ENCODE measurements at regions of chr9 and their contacts with region 1.

Region 1: DNA sequence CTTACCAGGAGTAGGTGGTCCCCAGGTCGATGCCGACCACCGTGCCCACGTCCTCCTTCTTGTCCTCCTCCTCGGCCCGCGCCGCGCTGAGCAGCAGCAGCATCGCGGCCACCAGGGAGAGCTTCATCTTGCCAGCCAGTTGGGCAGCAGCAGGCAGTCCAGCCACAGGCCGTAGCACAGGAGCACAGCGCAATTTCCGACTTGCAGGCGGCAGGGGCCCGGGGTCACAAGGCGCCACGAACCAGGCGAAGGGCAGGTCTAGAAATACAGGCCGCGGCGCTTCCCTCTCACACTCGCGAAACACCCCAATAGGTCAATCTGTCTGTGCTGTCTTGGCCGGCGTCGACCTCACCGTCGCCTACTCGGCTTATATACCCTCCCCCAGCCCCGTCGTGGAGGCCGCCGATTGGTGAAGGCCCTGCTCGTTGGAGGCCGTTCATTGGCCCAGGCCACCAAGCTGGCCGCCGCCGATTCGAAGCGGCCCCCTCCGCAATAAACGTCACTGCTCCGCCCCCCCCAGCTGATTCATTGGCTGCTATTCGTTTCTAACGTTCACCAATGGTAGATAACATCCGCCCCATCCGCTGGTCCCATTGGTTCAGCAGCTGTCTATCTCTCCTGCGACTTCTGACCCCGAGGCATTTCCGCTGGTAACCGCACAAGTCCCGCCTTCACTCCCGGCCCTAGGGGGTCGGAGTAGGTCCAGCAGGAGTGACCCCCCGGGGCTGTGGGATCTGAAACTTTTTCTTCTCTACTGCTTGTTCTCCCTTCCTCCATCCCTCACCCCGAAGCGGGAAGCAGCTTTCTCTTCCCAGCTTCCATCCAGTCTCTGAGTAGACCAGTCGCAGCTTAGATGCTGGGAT is at the start of gene HSPA5:
- DNase-seq: peak; percentile 97
- ATAC-seq: peak; percentile 80
- H3K4me3 ChIP-seq: peak within 1 kb of the TSS; percentile 93
- H3K27ac ChIP-seq: peak within 1 kb of the TSS; percentile 72
- H3K4me1 ChIP-seq: peaks cover 43% of the 10 kb centered on the region
- H3K27me3 ChIP-seq: no peaks in the 10 kb centered on the region
- CTCF ChIP-seq: no peak
- total RNA-seq, gene HSPA5: 112 and 142 TPM in 2 replicates

Region 2: GRCh38 chr9:125200210-125201047 is 40.8 kb before region 1 on chr9 and contains the start of gene RABEPK:
- CTCF ChIA-PET with region 1: no interaction called
- POLR2A ChIA-PET with region 1: no interaction called
- intact Hi-C with region 1: no loop called
- DNase-seq: peak; percentile 89
- ATAC-seq: peak; percentile 97
- H3K4me3 ChIP-seq: peak within 1 kb of the TSS; percentile 85
- H3K27ac ChIP-seq: peak within 1 kb of the TSS; percentile 41
- H3K4me1 ChIP-seq: peaks cover 9% of the 10 kb centered on the region
- H3K27me3 ChIP-seq: no peaks in the 10 kb centered on the region
- CTCF ChIP-seq: no peak
- total RNA-seq, gene RABEPK: 22.2 and 27.8 TPM in 2 replicates

Region 3: DNA sequence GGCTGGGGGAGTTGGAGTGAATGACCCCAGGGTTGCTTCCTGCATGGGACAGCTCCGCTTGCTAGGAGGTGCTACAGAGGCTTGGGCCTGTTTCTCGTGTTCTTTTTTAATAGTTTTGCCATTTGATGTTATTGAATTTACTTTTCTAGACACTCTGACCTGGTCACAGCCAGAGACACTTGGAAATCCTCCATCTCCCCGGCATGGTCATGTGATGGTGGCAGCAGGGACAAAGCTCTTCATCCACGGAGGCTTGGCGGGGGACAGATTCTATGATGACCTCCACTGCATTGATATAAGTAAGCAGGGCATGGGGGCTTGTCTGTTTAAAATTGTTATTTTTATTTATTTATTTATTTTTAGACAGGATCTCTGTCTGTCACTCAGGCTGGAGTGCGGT is 13.5 kb before region 1 on chr9:
- CTCF ChIA-PET with region 1: no interaction called
- POLR2A ChIA-PET with region 1: no interaction called
- intact Hi-C with region 1: no loop called
- DNase-seq: no peak
- ATAC-seq: no peak
- H3K4me3 ChIP-seq: no peak overlapping the region
- H3K27ac ChIP-seq: no peak overlapping the region
- H3K4me1 ChIP-seq: no peaks in the 10 kb centered on the region
- H3K27me3 ChIP-seq: no peaks in the 10 kb centered on the region
- CTCF ChIP-seq: no peak

Region 4: DNA sequence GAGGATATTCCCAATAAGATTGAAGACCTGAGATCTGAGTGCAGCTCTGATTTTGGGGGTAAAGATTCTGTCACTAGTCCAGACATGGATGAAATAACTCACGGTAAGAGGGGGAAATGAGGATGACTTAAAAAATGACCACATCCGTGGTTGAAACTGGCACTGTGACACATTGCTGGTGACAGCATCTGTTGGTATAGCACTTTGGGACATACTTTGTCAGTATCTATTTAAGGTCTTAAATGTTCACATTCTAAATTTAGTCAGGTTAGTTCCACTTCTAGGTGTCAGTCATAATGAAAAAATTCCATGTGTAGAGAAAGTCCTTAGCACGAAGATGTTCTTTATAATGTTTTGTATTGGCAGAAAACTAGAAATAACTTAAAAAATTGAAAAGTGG is 91.3 kb after region 1 on chr9:
- CTCF ChIA-PET with region 1: no interaction called
- POLR2A ChIA-PET with region 1: interaction called, 5 read pairs
- intact Hi-C with region 1: loop called (anchors 1 kb)
- DNase-seq: peak; percentile 4
- ATAC-seq: no peak
- H3K4me3 ChIP-seq: no peak overlapping the region
- H3K27ac ChIP-seq: no peak overlapping the region
- H3K4me1 ChIP-seq: peaks cover 24% of the 10 kb centered on the region
- H3K27me3 ChIP-seq: no peaks in the 10 kb centered on the region
- CTCF ChIP-seq: no peak

Measured in PC-3 (cell line).